HEK293 (cell line): ENCODE measurements at regions of chr16 and their contacts with region 1.

Region 1: GRCh38 chr16:84773312-84773711 is 46.5 kb upstream of the CRISPLD2 start:
- H3K4me3 ChIP-seq: no peak overlapping the region
- H3K27ac ChIP-seq: no peak overlapping the region
- H3K4me1 ChIP-seq: no peaks in the 10 kb centered on the region
- CTCF ChIP-seq: no peak

Region 2: DNA sequence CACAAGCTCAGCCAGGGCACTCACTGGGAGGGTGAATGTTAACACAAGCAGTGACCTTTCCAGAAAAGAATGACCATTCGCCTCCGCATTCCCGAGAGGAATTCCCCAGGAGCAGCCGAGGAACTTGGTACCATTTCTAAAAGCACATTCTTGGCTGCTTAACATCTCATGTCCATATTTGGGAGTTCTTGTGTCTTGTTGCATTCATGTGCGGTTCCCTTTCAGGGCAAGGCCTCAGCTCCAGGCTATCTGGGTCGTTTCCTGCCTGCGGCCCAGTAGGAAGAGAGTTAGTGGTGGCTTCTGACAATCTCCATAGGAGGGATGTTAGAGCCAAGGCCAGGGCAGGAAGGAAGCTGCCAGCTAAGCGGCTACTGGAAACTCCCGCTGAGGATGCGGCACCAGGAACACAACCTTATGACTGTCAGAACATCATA is 241.0 kb before region 1 on chr16:
- CTCF ChIA-PET with region 1: no interaction called
- POLR2A ChIA-PET with region 1: no interaction called
- H3K4me3 ChIP-seq: no peak overlapping the region
- H3K27ac ChIP-seq: no peak overlapping the region
- H3K4me1 ChIP-seq: no peaks in the 10 kb centered on the region
- CTCF ChIP-seq: no peak

Region 3: DNA sequence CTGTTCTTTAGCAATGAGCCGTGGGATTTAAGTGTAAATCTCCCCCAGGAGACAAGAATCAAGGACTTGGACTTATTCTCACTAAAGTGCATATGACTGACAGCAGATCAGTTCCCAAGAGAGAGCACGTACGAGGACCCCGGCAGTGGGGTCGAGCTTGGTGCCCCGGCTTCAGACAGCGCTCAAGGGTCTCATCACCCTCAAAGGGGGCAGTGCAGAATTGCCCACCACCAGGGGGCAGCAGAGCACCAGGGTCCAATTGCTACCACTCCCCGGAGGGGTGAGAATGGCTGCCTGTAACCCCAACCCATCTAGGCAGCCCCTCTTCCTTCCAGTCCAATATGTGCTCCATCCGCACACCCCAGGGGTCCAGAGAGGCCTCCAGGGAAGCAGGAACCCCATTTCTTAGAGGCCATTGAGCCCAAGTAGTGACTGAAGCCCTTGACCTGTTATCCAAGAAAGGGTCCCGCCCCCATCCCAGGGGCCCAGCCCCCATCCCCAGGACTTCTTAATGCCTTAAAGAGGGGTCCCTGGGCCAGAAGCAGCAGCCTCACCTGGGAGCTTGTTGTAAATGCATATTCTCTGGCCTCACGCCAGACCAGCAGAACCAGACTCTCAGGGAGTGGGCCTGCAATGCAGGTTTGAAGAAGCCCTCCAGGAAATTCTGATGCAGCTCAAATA is 151.9 kb after region 1 on chr16:
- CTCF ChIA-PET with region 1: interaction called, 10 read pairs
- POLR2A ChIA-PET with region 1: no interaction called
- H3K4me3 ChIP-seq: no peak overlapping the region
- H3K27ac ChIP-seq: no peak overlapping the region
- H3K4me1 ChIP-seq: no peaks in the 10 kb centered on the region; the same call in 1 of the 2 replicates
- CTCF ChIP-seq: peak; percentile 73